PC-3 (cell line): ENCODE measurements at regions of chr7 and their contacts with region 1.

Region 1: GRCh38 chr7:128660596-128660995 is 11.5 kb upstream of the GARIN1A start:
- DNase-seq: no peak
- ATAC-seq: no peak
- H3K4me3 ChIP-seq: no peak overlapping the region
- H3K27ac ChIP-seq: no peak overlapping the region
- H3K4me1 ChIP-seq: no peaks in the 10 kb centered on the region
- H3K27me3 ChIP-seq: no peaks in the 10 kb centered on the region
- CTCF ChIP-seq: no peak

Region 2: DNA sequence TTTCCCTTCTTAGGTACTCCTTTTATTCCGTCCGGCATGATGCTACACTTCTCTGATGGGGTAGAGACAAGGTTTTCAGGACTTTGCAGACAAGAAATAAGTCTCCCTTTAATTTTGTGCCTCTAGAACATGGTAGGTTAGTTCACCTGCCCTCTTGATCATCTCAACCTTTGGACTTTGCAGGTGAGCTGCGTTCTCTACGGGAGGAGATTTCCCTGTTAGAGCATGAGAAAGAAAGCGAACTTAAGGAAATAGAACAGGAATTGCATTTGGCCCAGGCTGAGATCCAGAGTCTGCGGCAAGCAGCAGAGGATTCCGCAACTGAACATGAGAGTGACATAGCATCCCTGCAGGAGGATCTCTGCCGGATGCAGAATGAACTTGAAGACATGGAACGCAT is 140.4 kb after region 1 on chr7:
- CTCF ChIA-PET with region 1: no interaction called
- POLR2A ChIA-PET with region 1: interaction called, 11 read pairs
- intact Hi-C with region 1: no loop called
- DNase-seq: no peak
- ATAC-seq: no peak
- H3K4me3 ChIP-seq: no peak overlapping the region
- H3K27ac ChIP-seq: no peak overlapping the region
- H3K4me1 ChIP-seq: no peaks in the 10 kb centered on the region
- H3K27me3 ChIP-seq: no peaks in the 10 kb centered on the region
- CTCF ChIP-seq: no peak